Activated T-helper 1 cell treated with anti-CD3 and anti-CD28 coated beads, Interleukin-12 subunit alpha, Interleukin-12 subunit beta, Interleukin-2, Interleukin-4 antibody, amounts not matched to agents 30 ng/mL and 10 ng/mL and 1 ng/mL, durations not matched to agents 14 hours and 24 hours and 36 hours (primary cell): ENCODE measurements at regions of chr1 and their contacts with region 1.

Region 1: GRCh38 chr1:181044449-181044966 is 10.7 kb downstream of the MR1 start:
- DNase-seq: peak; percentile 63
- H3K4me3 Mint-ChIP-seq: peak overlapping the region; percentile 79
- H3K27ac Mint-ChIP-seq: peak overlapping the region; percentile 96
- H3K4me1 Mint-ChIP-seq: peaks cover 49% of the 10 kb centered on the region
- H3K27me3 Mint-ChIP-seq: no peaks in the 10 kb centered on the region

Region 2: GRCh38 chr1:180994262-180994661 is 50.2 kb before region 1 on chr1:
- intact Hi-C with region 1: no loop called
- DNase-seq: no peak
- H3K4me3 Mint-ChIP-seq: no peak overlapping the region
- H3K27ac Mint-ChIP-seq: no peak overlapping the region
- H3K4me1 Mint-ChIP-seq: peaks cover 13% of the 10 kb centered on the region
- H3K27me3 Mint-ChIP-seq: no peaks in the 10 kb centered on the region

Region 3: DNA sequence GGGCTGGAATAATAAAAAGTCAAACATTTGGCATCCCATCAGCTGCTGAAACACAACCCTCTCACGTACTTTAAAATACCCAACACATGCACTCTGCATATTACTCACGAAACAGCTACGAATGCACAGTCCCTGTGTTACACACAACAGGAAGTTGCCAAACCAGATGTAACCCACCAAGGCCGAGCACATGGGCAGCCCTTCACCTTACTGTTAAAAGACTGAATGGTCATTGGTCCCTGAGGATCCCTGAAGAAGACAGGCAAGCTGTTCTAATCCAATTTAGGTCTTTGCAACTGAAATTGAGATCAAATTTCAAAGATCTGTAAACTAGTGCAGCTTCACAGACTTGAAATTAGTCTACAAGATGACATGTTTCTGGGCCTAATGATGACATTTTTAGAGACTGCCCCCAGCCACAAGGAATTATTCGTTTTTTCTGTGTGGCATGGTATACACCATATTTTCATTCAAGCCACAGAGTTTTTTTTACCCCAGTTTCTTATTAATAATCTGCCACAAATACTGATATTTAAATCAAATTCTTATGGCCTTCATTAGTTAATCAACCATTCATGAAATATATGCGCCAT is 18.4 kb after region 1 on chr1:
- intact Hi-C with region 1: loop called (anchors 1 kb)
- DNase-seq: peak; percentile 14
- H3K4me3 Mint-ChIP-seq: peak overlapping the region; percentile 34
- H3K27ac Mint-ChIP-seq: peak overlapping the region; percentile 70
- H3K4me1 Mint-ChIP-seq: peaks cover 25% of the 10 kb centered on the region
- H3K27me3 Mint-ChIP-seq: no peaks in the 10 kb centered on the region

Region 4: GRCh38 chr1:181073638-181074037 is 29.1 kb after region 1 on chr1:
- intact Hi-C with region 1: no loop called
- DNase-seq: no peak
- H3K4me3 Mint-ChIP-seq: no peak overlapping the region
- H3K27ac Mint-ChIP-seq: no peak overlapping the region
- H3K4me1 Mint-ChIP-seq: no peaks in the 10 kb centered on the region
- H3K27me3 Mint-ChIP-seq: peaks cover 39% of the 10 kb centered on the region